MCF 10A (cell line): ENCODE measurements at regions of chr10 and their contacts with region 1.

Region 1: GRCh38 chr10:13299437-13300287 is at the start of gene PHYH:
- DNase-seq: peak; percentile 83
- H3K4me3 Mint-ChIP-seq: peak within 1 kb of the TSS; percentile 80
- H3K27ac Mint-ChIP-seq: no peak within 1 kb of the TSS
- H3K4me1 Mint-ChIP-seq: peaks cover 5% of the 10 kb centered on the region
- H3K27me3 Mint-ChIP-seq: no peaks in the 10 kb centered on the region
- CTCF ChIP-seq: no peak
- total RNA-seq, gene PHYH: 9.8 and 13.7 TPM in 2 replicates

Region 2: GRCh38 chr10:13099666-13100348 is 199.9 kb before region 1 on chr10 and contains the start of gene OPTN:
- CTCF ChIA-PET with region 1: interaction called, 6 read pairs
- POLR2A ChIA-PET with region 1: interaction called, 5 read pairs
- intact Hi-C with region 1: loop called (anchors 1 kb)
- DNase-seq: peak; percentile 81
- H3K4me3 Mint-ChIP-seq: peak within 1 kb of the TSS; percentile 83
- H3K27ac Mint-ChIP-seq: peak within 1 kb of the TSS; percentile 87
- H3K4me1 Mint-ChIP-seq: peaks cover 26% of the 10 kb centered on the region
- H3K27me3 Mint-ChIP-seq: no peaks in the 10 kb centered on the region
- CTCF ChIP-seq: peak; percentile 75
- total RNA-seq, gene OPTN: 79.6 and 109 TPM in 2 replicates

Region 3: GRCh38 chr10:13206546-13207443 is 92.9 kb before region 1 on chr10:
- CTCF ChIA-PET with region 1: interaction called, 60 read pairs
- POLR2A ChIA-PET with region 1: interaction called, 10 read pairs
- intact Hi-C with region 1: loop called (anchors 1 kb)
- DNase-seq: peak; percentile 4
- H3K4me3 Mint-ChIP-seq: no peak overlapping the region
- H3K27ac Mint-ChIP-seq: no peak overlapping the region
- H3K4me1 Mint-ChIP-seq: no peaks in the 10 kb centered on the region
- H3K27me3 Mint-ChIP-seq: no peaks in the 10 kb centered on the region
- CTCF ChIP-seq: peak; percentile 48

Region 4: GRCh38 chr10:13317474-13317873 is 17.8 kb after region 1 on chr10:
- CTCF ChIA-PET with region 1: interaction called, 17 read pairs
- POLR2A ChIA-PET with region 1: interaction called, 3 read pairs
- intact Hi-C with region 1: no loop called
- DNase-seq: no peak
- H3K4me3 Mint-ChIP-seq: no peak overlapping the region
- H3K27ac Mint-ChIP-seq: no peak overlapping the region
- H3K4me1 Mint-ChIP-seq: no peaks in the 10 kb centered on the region
- H3K27me3 Mint-ChIP-seq: no peaks in the 10 kb centered on the region
- CTCF ChIP-seq: no peak

Region 5: GRCh38 chr10:13348216-13349017 is 48.8 kb after region 1 on chr10 and contains the start of gene SEPHS1:
- CTCF ChIA-PET with region 1: interaction called, 4 read pairs
- POLR2A ChIA-PET with region 1: interaction called, 16 read pairs
- intact Hi-C with region 1: loop called (anchors 5 kb)
- DNase-seq: peak; percentile 87
- H3K4me3 Mint-ChIP-seq: peak within 1 kb of the TSS; percentile 86
- H3K27ac Mint-ChIP-seq: peak within 1 kb of the TSS; percentile 83
- H3K4me1 Mint-ChIP-seq: peaks cover 13% of the 10 kb centered on the region
- H3K27me3 Mint-ChIP-seq: peaks cover 10% of the 10 kb centered on the region
- CTCF ChIP-seq: no peak
- total RNA-seq, gene SEPHS1: 44.8 and 60.8 TPM in 2 replicates